ENCODE measurements at regions of chr13 and their contacts with region 1.

Region 1: DNA sequence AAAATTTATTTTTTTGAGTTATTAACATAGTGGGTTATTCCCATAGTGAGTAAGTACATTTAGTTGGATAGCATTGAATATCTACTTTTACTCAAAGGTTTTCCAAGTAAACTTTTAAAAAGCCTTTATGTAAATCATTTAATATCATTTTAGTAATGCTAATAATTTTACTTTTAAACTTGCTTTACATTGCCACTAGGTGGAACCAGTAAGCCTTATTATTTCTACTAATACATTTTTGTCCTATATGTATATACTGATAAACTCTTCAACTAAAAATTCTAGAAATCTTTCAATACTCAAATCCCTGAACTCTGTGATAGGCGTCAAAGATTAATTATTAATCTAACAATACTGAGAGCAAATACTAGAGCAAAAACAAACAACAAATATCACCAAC is 1709.2 kb upstream of the PCDH20 start:
- DNase-seq: no peak
- ATAC-seq: no peak
- H3K4me3 Mint-ChIP-seq: no peak overlapping the region
- H3K27ac Mint-ChIP-seq: no peak overlapping the region
- H3K4me1 Mint-ChIP-seq: no peaks in the 10 kb centered on the region
- H3K27me3 Mint-ChIP-seq: no peaks in the 10 kb centered on the region
- CTCF ChIP-seq: no peak

Region 2: DNA sequence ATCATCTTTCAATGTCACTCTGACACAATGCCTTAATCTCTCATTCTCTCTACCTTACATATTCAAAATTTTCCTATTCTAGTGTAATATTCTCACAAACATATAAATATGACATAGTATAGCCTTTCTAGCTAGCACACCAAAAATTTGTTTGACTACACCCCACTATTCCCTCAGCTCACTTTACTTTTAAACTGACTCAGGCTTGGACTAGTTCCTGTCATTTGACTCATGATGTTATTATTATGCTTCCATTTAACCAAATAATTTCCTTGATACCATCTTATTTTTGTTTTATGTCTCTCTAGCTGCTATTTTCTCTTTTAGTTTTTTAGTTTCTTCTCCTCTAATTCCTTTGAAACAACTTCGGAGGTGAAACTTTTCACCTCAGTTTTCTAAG is 36.4 kb after region 1 on chr13:
- CTCF ChIA-PET with region 1: no interaction called
- POLR2A ChIA-PET with region 1: no interaction called
- intact Hi-C with region 1: loop called (anchors 1 kb)
- DNase-seq: no peak
- ATAC-seq: no peak
- H3K4me3 Mint-ChIP-seq: no peak overlapping the region
- H3K27ac Mint-ChIP-seq: no peak overlapping the region
- H3K4me1 Mint-ChIP-seq: no peaks in the 10 kb centered on the region
- H3K27me3 Mint-ChIP-seq: no peaks in the 10 kb centered on the region
- CTCF ChIP-seq: no peak

Measured in activated B cell treated with CpG ODN at 0.5 μM for 24 hours (primary cell).